ENCODE measurements at regions of chr10 and their contacts with region 1.

Region 1: DNA sequence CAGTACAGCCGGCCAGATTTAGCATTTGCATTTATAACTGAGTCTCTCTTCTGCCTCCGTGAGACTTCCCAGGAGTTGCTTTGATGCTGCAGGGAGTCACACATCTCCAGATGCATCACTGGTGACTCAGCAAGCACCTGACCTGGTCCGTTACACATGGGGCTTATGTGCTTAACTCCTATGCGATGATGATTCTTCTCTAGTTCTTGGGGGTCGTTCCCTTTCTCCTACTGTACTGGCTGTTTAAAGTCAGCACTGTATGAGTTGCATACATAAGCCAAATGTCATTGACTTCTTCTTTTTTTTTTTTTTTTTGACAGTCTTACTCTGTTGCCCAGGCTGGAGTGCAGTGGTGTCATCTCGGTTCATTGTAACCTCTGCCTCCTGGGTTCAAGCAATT is 13.0 kb upstream of the AKR1E2 start:
- DNase-seq: no peak
- H3K4me3 ChIP-seq: no peak overlapping the region
- H3K27ac ChIP-seq: peak overlapping the region in 1 of 2 experiments; percentile 68; a peak in 2 of 4 replicates
- H3K4me1 ChIP-seq: peaks cover 0 to 14% of the 10 kb centered on the region in 2 experiments; a peak in 1 of 4 replicates
- H3K27me3 ChIP-seq: no peaks in the 10 kb centered on the region
- CTCF ChIP-seq: no peak
- EP300 ChIP-seq: peak in 1 of 2 experiments; percentile 71; a peak in 1 of 4 replicates
- RAD21 ChIP-seq: no peak

Region 2: DNA sequence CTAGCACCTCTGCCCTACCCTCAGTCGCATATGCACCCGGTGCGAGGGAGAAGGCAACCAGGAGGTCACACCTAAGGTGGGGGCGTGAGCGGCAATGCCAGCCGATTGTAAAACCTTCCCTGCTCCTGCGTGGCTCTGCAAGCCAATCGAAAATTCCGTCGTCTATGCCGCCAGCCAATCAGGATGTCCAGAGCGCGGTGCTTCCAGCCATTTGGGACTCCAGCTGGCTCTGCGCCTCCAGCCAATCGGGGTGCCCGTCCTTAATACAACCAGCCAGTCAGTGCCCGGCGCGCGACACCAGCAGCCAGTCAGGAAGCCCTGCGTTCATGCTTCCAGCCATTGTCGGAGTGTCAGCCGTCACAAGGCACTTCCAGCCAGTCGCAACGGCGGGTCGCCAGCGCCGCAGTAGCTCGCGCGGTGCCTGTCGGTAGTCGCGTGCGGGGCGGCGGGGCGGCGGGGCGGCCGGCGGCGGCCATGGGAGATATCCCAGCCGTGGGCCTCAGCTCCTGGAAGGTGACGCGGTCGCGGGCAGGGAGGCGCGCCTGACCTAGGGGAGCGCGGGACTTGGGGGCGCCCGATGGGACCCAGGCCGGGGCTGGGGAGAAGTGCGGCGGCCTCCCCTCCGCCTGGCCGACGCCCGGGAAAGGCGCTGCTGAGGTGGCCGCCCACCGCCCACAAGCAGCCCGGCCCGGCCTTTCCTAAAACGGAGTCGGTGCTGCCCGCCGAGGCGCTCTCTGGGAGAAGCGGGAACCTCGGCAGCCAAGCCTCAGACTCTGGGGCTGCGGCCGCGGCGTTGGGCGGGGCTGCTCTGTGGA is 13.0 kb after region 1 on chr10 and contains the start of gene AKR1E2:
- CTCF ChIA-PET with region 1: interaction called, 15 read pairs
- POLR2A ChIA-PET with region 1: no interaction called
- DNase-seq: peak; percentile 95
- H3K4me3 ChIP-seq: peak within 1 kb of the TSS; percentile 60 to 62
- H3K27ac ChIP-seq: peak within 1 kb of the TSS; percentile 71
- H3K4me1 ChIP-seq: peaks cover 0 to 11% of the 10 kb centered on the region in 2 experiments; a peak in 1 of 4 replicates
- H3K27me3 ChIP-seq: no peaks in the 10 kb centered on the region
- CTCF ChIP-seq: no peak
- EP300 ChIP-seq: no peak
- RAD21 ChIP-seq: no peak
- polyA plus RNA-seq, gene AKR1E2: 5.8 and 6.9 TPM in 2 replicates

Region 3: DNA sequence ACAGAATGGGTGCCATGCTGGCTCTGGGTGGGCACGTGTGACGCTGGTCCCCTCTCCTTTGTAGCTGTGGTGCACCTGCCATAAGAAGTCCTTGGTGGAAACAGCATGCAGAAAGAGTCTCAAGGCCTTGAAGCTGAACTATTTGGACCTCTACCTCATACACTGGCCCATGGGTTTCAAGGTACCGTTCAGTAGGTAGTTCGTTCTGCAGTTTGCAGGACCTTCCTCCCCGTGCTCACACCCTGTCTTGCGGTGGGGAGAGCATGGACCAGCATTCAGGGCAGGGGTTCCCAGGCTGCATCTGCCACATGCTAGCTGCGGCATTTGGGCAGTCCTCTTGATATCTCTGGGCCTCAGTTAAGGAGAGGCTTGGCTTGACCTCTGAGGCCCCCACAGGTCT is 20.3 kb after region 1 on chr10:
- CTCF ChIA-PET with region 1: interaction called, 12 read pairs
- POLR2A ChIA-PET with region 1: no interaction called
- DNase-seq: no peak
- H3K4me3 ChIP-seq: no peak overlapping the region
- H3K27ac ChIP-seq: no peak overlapping the region; a peak in 1 of 4 replicates
- H3K4me1 ChIP-seq: peaks cover 0 to 23% of the 10 kb centered on the region in 2 experiments; a peak in 2 of 4 replicates
- H3K27me3 ChIP-seq: no peaks in the 10 kb centered on the region
- CTCF ChIP-seq: no peak
- EP300 ChIP-seq: no peak
- RAD21 ChIP-seq: no peak

Region 4: DNA sequence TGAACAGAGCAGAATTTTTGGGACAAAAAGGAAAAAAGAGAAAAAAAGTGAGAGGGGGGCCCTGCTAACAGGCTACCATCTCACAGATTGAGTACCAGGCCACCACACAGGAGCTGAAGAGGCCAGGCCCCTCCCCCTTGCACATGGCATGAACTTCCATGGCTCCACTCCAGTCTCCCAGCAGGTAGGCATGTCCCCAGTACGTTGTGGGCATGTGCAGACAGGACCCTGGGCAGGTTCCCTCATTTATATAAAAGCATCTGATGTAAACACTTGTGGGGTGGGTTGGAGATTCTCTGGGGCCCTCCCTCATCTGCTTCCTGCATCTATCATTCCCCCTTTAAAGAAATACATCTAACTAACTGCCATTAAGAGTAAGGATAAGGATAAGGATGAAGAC is 105.2 kb after region 1 on chr10:
- CTCF ChIA-PET with region 1: no interaction called
- POLR2A ChIA-PET with region 1: no interaction called
- DNase-seq: no peak
- H3K4me3 ChIP-seq: no peak overlapping the region
- H3K27ac ChIP-seq: no peak overlapping the region
- H3K4me1 ChIP-seq: no peaks in the 10 kb centered on the region
- H3K27me3 ChIP-seq: no peaks in the 10 kb centered on the region
- CTCF ChIP-seq: no peak
- EP300 ChIP-seq: no peak
- RAD21 ChIP-seq: no peak

Region 5: GRCh38 chr10:5094265-5095205 is 281.5 kb after region 1 on chr10 and contains the start of gene AKR1C3:
- CTCF ChIA-PET with region 1: interaction called, 11 read pairs
- POLR2A ChIA-PET with region 1: no interaction called
- DNase-seq: peak; percentile 32
- H3K4me3 ChIP-seq: peak within 1 kb of the TSS; percentile 48 to 57
- H3K27ac ChIP-seq: no peak within 1 kb of the TSS; a peak in 1 of 4 replicates
- H3K4me1 ChIP-seq: no peaks in the 10 kb centered on the region; a peak in 2 of 4 replicates
- H3K27me3 ChIP-seq: no peaks in the 10 kb centered on the region
- CTCF ChIP-seq: peak; percentile 73
- EP300 ChIP-seq: no peak
- RAD21 ChIP-seq: peak; percentile 66
- polyA plus RNA-seq, gene AKR1C3: 0.28 and 0.70 TPM in 2 replicates

Region 6: GRCh38 chr10:5434017-5434753 is 621.2 kb after region 1 on chr10:
- CTCF ChIA-PET with region 1: interaction called, 15 read pairs
- POLR2A ChIA-PET with region 1: no interaction called
- DNase-seq: peak; percentile 47
- H3K4me3 ChIP-seq: peak overlapping the region in 1 of 2 experiments; percentile 47; a peak in 2 of 4 replicates
- H3K27ac ChIP-seq: peak overlapping the region; percentile 60 to 89
- H3K4me1 ChIP-seq: peaks cover 0 to 13% of the 10 kb centered on the region in 2 experiments; a peak in 3 of 4 replicates
- H3K27me3 ChIP-seq: no peaks in the 10 kb centered on the region
- CTCF ChIP-seq: peak; percentile 78
- EP300 ChIP-seq: no peak
- RAD21 ChIP-seq: peak; percentile 77

Measured in SK-N-SH (cell line).